H1 (cell line): ENCODE measurements at regions of chr17 and their contacts with region 1.

Region 1: DNA sequence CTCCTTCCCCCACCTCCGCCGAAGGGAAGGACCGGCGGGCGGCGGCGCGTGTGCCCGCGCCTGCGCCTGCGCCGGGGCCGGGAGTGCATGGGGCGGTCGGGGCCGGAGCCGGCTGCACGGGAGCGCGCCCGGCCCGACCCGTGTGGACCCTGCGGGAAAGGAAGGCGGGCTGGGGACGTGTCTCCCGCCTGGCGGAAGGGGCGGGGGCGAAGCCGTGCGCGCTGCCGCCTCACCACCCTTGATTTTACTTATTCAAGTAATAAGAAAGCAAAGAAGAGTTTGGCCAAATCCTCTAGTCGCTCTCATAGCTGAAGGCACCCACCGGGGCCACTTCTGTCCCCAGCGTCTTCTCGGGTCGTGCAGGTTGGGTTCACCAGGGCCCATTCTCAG is 596 bp upstream of the PFN1 start:
- DNase-seq: peak in 1 of 2 experiments; percentile 85
- H3K4me3 ChIP-seq: peak overlapping the region; percentile 87 to 99 (median 96)
- H3K27ac ChIP-seq: peak overlapping the region; percentile 94; the same call in 1 of the 2 replicates
- H3K4me1 ChIP-seq: peaks cover 4 to 17% (median 12%) of the 10 kb centered on the region in 4 experiments
- H3K27me3 ChIP-seq: no peaks in the 10 kb centered on the region
- CTCF ChIP-seq: no peak
- EP300 ChIP-seq: no peak
- POLR2A ChIP-seq: peak in 1 of 2 experiments; percentile 25; a peak in 2 of 3 replicates
- RAD21 ChIP-seq: no peak

Region 2: GRCh38 chr17:4908301-4908700 is 40.6 kb before region 1 on chr17:
- CTCF ChIA-PET with region 1: interaction called, 20 read pairs
- POLR2A ChIA-PET with region 1: interaction called, 14 read pairs
- DNase-seq: no peak
- H3K4me3 ChIP-seq: no peak overlapping the region
- H3K27ac ChIP-seq: no peak overlapping the region
- H3K4me1 ChIP-seq: peaks cover 2 to 12% (median 4%) of the 10 kb centered on the region in 4 experiments; a peak in 6 of 7 replicates
- H3K27me3 ChIP-seq: no peaks in the 10 kb centered on the region
- CTCF ChIP-seq: no peak
- EP300 ChIP-seq: no peak
- POLR2A ChIP-seq: no peak
- RAD21 ChIP-seq: no peak

Region 3: GRCh38 chr17:4934173-4934979 is 14.6 kb before region 1 on chr17:
- CTCF ChIA-PET with region 1: interaction called, 5 read pairs
- POLR2A ChIA-PET with region 1: interaction called, 987 read pairs
- DNase-seq: no peak
- H3K4me3 ChIP-seq: no peak overlapping the region
- H3K27ac ChIP-seq: no peak overlapping the region
- H3K4me1 ChIP-seq: peaks cover 0 to 8% (median 6%) of the 10 kb centered on the region in 4 experiments; a peak in 6 of 7 replicates
- H3K27me3 ChIP-seq: no peaks in the 10 kb centered on the region
- CTCF ChIP-seq: peak; percentile 15 to 55 (median 51)
- EP300 ChIP-seq: no peak
- POLR2A ChIP-seq: no peak
- RAD21 ChIP-seq: peak; percentile 25 to 52; a peak in 3 of 4 replicates

Region 4: DNA sequence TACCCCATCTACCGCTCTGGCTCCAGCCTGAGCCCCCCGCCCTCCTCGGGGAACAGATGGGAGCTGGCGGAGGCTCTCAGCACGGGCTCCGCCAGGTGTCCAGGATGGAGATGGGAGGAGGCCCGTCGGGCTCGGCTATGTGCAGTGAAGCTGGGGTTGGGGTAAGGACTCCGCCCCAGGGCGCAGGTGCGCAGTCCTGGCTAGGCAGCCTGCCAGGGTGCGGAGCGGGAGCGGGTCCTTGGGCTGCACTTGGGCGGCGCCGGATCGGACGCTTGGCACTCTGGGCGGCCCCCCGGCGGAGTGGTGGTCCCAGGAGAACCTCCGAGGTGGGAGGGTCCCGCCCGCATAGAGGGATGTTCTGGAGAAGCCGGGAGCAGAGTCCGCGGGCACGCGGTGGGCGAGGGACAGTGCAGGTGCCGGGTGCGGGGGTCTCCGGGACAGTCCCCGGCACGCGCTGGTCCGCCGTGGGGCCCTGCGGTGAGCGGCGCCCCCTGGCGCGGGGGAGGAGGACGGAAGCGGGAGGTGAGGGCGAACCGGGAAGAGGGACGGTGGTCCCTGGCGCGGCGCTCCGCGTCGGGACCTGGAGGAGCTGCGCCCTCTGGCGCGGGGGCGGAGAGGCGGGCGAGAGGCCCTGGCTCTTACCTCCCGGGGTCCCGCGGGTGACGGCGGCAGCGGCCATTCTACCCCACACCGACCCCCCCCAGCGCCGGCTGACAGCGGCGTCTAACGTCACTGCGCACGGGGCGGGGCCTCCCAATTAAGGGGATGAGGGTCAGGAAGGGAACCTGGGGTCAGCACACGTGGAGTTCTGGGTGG is 38.2 kb after region 1 on chr17 and contains the start of gene CAMTA2:
- CTCF ChIA-PET with region 1: interaction called, 3 read pairs
- POLR2A ChIA-PET with region 1: interaction called, 13 read pairs
- DNase-seq: peak in 1 of 2 experiments; percentile 93
- H3K4me3 ChIP-seq: peak within 1 kb of the TSS; percentile 59 to 85 (median 66)
- H3K27ac ChIP-seq: no peak within 1 kb of the TSS
- H3K4me1 ChIP-seq: peaks cover 0 to 7% (median 4%) of the 10 kb centered on the region in 4 experiments; a peak in 5 of 7 replicates
- H3K27me3 ChIP-seq: peaks cover 0 to 11% (median 9%) of the 10 kb centered on the region in 4 experiments; a peak in 6 of 7 replicates
- CTCF ChIP-seq: peak; percentile 40 to 52 (median 47)
- EP300 ChIP-seq: peak in 1 of 2 experiments; percentile 29; a peak in 1 of 3 replicates
- POLR2A ChIP-seq: no peak
- RAD21 ChIP-seq: peak in 1 of 2 experiments; percentile 27; a peak in 1 of 4 replicates
- total RNA-seq, gene CAMTA2: 11.4 and 12.0 TPM in 2 replicates